RWPE1 (cell line): ENCODE measurements at regions of chr4 and their contacts with region 1.

Region 1: GRCh38 chr4:163295138-163295537 is 37.3 kb downstream of the NPY1R start:
- DNase-seq: no peak
- H3K27ac ChIP-seq: no peak overlapping the region
- CTCF ChIP-seq: no peak

Region 2: GRCh38 chr4:162931306-162931705 is 363.8 kb before region 1 on chr4:
- CTCF ChIA-PET with region 1: interaction called, 10 read pairs
- POLR2A ChIA-PET with region 1: no interaction called
- DNase-seq: no peak
- H3K27ac ChIP-seq: no peak overlapping the region
- CTCF ChIP-seq: no peak

Region 3: DNA sequence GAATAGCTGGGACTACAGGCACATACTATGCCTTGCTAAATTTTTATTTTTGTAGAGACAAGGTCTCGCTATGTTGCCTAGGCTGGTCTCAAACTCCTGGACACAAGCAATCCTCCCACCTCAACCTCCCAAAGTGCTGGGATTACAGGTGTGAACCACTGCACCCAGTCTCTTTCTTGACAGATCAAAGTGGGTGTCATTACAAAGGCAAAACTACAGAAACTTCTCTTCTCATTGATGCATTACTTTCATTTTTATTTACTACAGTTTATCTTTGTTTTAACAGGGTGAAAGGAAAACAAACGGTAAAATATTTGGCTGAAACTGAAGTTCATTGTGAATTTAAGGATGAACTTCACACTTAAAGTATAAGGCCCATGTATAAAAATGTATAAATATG is 203.0 kb before region 1 on chr4:
- CTCF ChIA-PET with region 1: no interaction called
- POLR2A ChIA-PET with region 1: no interaction called
- DNase-seq: no peak
- H3K27ac ChIP-seq: no peak overlapping the region
- CTCF ChIP-seq: no peak

Region 4: DNA sequence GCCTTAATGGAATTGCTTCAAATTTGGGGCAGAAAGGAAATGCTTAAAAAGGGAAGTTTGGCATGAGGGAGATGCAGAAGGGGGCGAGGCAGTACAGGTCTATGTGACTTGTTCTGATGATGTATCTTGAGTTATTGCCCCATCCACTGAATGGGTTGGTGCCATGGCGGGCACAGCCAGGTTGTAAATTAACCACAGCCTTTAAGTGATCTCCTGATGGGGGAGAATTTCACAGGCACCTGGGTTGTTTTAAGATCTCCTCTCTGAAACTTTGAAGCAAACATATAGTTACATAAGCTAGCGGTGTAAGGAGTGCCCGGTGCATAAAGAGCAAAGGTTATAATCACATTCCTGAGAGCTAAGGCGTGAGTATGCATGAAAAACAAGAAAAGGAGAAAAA is 85.6 kb after region 1 on chr4:
- CTCF ChIA-PET with region 1: no interaction called
- POLR2A ChIA-PET with region 1: no interaction called
- DNase-seq: no peak
- H3K27ac ChIP-seq: no peak overlapping the region
- CTCF ChIP-seq: no peak

Region 5: GRCh38 chr4:163473576-163473975 is 178.4 kb after region 1 on chr4 and contains the start of gene TKTL2:
- CTCF ChIA-PET with region 1: no interaction called
- POLR2A ChIA-PET with region 1: no interaction called
- DNase-seq: no peak
- H3K27ac ChIP-seq: no peak within 1 kb of the TSS
- CTCF ChIP-seq: no peak